HEK293T (cell line): ENCODE measurements at regions of chr16 and their contacts with region 1.

Region 1: DNA sequence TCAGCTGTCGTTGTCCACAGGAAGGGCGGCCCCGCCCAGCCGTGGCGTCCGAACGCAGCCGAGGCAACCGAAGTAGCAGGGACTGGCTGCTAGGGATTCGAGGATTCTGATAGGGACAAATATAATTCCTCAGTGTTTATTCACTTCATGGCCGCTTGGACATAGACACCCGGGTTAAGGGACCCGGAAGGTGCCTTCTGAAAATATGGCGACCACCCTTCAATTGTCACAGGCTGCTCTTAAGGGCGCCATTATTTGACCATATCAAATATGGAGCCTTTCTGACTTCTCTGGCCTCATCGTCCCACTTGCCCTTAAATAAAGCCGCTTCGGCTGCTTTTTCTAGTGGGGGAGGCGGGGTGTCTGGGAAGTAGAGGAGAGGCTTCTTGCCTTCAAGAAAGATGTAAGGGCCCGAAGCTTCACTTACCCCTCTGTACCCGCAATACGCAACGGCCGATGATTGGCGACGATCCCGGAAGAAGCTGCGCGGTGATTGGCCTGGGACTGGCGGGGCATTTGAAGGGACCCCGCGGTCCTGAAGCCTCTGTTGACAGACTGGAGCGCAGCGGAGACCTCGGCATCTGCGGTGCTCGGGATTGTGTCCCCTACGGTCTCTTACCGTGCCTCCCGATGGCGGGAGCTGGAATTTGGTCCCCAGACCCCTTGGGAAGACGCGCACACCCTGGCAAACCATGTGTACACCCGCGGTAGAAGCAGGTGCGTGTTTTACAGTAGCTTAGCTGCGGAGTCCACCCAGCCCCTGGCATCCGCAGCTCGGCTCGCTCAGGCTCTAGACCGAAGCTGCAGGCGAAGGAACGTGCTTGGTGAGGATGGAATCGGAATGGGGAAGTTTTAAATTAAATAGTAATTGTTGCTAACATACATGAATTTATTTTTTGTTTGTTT is at the start of gene ZNF688:
- DNase-seq: peak; percentile 96

Region 2: DNA sequence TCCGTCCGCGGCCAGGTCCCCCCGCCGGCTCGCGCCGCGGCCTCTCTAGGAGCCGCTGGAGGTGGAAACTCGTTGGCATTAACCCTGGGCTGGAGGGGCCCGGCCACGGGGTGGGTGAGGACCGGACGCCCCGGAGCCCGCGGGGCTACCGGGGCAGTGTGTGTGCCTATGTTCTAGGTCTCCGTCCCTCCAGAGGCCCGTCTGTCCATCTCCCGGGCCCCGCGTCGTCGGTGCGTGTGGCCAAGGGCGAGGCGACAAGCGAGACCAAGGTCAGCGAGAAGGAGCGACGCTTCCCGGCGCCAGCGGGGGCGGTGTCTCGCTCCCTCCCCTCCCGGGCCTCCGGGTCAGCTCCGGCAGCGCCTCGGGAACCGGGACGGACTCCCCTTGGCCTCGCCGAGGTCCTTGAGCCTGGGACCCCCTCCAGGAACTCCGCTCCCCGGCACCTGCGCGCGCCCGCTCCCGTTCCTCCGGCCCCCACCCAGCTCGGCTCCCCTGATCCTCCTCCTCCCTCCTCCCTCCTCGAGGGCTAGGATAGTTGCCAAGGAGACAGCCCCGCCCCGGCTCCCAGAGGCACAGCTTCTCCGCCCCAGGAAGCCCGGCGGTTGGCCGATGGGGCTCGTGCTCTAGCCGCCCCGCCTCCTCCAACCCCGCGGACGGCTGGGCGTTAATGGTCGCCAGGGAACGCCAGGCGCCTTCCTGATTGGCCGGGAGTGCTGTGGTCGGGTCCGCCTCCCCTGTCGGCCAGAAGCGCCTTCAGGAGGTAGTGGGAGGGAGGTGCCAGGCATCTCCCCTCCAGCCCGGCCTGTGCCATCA is 44.9 kb before region 1 on chr16:
- CTCF ChIA-PET with region 1: interaction called, 5 read pairs
- POLR2A ChIA-PET with region 1: interaction called, 49 read pairs
- DNase-seq: peak; percentile 99

Region 3: GRCh38 chr16:30551781-30552180 is 20.2 kb before region 1 on chr16:
- CTCF ChIA-PET with region 1: no interaction called
- POLR2A ChIA-PET with region 1: interaction called, 71 read pairs
- DNase-seq: no peak

Region 4: GRCh38 chr16:30582611-30583340 is 10.8 kb after region 1 on chr16:
- CTCF ChIA-PET with region 1: no interaction called
- POLR2A ChIA-PET with region 1: interaction called, 11 read pairs
- DNase-seq: no peak

Region 5: GRCh38 chr16:30609926-30610839 is 38.2 kb after region 1 on chr16 and contains the start of gene ZNF689:
- CTCF ChIA-PET with region 1: interaction called, 8 read pairs
- POLR2A ChIA-PET with region 1: interaction called, 53 read pairs
- DNase-seq: peak; percentile 100